Common myeloid progenitor, CD34-positive (primary cell): ENCODE measurements at regions of chr4 and their contacts with region 1.

Region 1: GRCh38 chr4:8267077-8267476 is 2.5 kb upstream of the HTRA3 start:
- DNase-seq: peak; percentile 56 to 78 (median 77)
- H3K4me3 ChIP-seq: no peak overlapping the region
- H3K27ac ChIP-seq: no peak overlapping the region
- H3K4me1 ChIP-seq: peaks cover 0 to 56% (median 43%) of the 10 kb centered on the region in 4 experiments
- H3K27me3 ChIP-seq: peaks cover 0 to 11% (median 3%) of the 10 kb centered on the region in 5 experiments

Region 2: DNA sequence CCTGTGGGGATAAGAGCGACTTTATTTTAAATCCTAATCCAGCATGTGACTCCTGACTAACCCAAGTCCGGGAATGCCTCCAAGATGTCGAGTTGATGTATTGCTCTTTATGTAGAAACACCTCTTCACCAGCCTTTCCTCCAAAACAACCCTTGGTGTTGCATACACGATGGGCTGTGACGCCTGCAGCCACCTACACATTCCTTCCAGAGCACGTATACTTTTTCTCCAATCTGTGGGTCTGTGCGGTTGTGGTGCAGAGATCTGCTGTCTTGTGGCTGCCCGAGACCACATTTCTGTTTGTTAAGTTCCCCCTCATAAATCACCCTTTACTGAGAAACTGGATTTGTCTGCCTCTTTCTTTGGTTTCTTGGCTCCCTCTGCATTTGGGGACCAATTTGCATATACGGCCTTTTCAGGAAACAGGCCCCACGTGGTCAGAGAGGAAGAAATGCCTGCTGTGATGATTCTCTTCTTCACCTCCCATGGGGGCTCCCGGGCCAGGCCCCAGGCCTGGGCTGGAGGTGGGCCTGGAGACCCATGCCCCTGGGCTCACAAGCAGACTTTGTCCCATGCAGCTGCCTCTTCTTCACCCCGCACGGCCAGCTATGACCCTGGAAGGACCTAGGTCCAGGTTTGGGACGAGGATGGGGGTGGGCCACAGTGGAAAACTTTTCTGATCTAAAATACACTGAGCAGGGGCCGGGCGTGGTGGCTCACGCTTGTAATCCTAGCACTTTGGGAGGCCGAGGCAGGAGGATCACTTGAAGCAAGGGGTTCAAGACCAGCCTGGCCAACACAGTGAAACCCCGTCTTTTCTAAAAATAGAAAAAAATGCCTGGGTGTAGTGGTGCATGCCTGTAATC is 306.1 kb before region 1 on chr4:
- CTCF ChIA-PET with region 1: no interaction called
- POLR2A ChIA-PET with region 1: no interaction called
- DNase-seq: peak; percentile 83 to 95 (median 95)
- H3K4me3 ChIP-seq: no peak overlapping the region
- H3K27ac ChIP-seq: no peak overlapping the region
- H3K4me1 ChIP-seq: peaks cover 0 to 13% (median 10%) of the 10 kb centered on the region in 4 experiments
- H3K27me3 ChIP-seq: peaks cover 0 to 88% (median 38%) of the 10 kb centered on the region in 5 experiments

Region 3: GRCh38 chr4:8079031-8079885 is 187.8 kb before region 1 on chr4:
- CTCF ChIA-PET with region 1: no interaction called
- POLR2A ChIA-PET with region 1: no interaction called
- DNase-seq: peak; percentile 86 to 92 (median 90)
- H3K4me3 ChIP-seq: no peak overlapping the region
- H3K27ac ChIP-seq: no peak overlapping the region
- H3K4me1 ChIP-seq: peaks cover 0 to 12% (median 8%) of the 10 kb centered on the region in 4 experiments
- H3K27me3 ChIP-seq: peaks cover 0 to 91% (median 18%) of the 10 kb centered on the region in 5 experiments

Region 4: GRCh38 chr4:8241895-8242696 is 25.0 kb before region 1 on chr4:
- CTCF ChIA-PET with region 1: interaction called, 17 read pairs
- POLR2A ChIA-PET with region 1: no interaction called
- DNase-seq: peak; percentile 64 to 83 (median 78)
- H3K4me3 ChIP-seq: no peak overlapping the region
- H3K27ac ChIP-seq: no peak overlapping the region
- H3K4me1 ChIP-seq: peaks cover 0 to 33% (median 20%) of the 10 kb centered on the region in 4 experiments
- H3K27me3 ChIP-seq: no peaks in the 10 kb centered on the region

Region 5: GRCh38 chr4:8247047-8247930 is 19.8 kb before region 1 on chr4:
- CTCF ChIA-PET with region 1: interaction called, 17 read pairs
- POLR2A ChIA-PET with region 1: no interaction called
- DNase-seq: no peak
- H3K4me3 ChIP-seq: no peak overlapping the region
- H3K27ac ChIP-seq: no peak overlapping the region
- H3K4me1 ChIP-seq: peaks cover 0 to 25% (median 7%) of the 10 kb centered on the region in 4 experiments
- H3K27me3 ChIP-seq: no peaks in the 10 kb centered on the region

Region 6: DNA sequence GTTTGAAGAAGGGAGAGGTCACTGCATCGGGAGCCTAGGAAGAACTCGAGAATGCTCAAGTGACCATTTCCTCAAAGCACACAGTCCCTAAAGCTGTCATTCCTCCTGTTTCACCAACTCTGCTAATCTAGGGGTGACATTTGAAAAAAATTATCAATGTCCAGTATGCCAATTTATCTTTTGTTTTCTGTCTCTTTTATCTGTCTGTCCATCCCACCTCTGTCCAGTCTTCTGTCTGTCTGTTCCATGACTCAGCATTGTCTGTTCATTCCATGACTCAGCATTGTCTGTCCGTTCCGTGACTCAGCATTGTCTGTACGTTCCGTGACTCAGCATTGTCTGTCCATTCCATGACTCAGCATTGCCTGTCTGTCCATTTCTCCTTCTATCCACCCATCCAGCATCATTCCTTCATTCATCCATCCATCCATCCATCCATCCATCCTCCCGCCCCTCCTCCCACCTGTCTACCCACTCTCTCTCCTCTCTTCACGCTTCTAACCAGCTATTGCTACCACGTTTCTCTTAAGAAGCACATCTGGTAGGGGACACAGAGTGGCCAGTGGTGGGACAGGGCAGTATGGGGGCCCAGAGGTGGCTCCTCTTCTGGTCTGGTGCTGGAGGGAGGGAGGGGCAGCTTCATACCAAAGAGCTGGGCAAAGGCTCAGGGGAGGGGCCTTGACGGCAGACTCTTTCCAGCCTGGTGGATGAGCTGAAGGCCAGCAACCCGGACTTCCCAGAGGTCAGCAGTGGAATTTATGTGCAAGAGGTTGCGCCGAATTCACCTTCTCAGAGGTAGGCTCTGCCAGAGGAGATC is 36.6 kb after region 1 on chr4:
- CTCF ChIA-PET with region 1: no interaction called
- POLR2A ChIA-PET with region 1: no interaction called
- DNase-seq: peak; percentile 65 to 87 (median 87)
- H3K4me3 ChIP-seq: no peak overlapping the region
- H3K27ac ChIP-seq: peak overlapping the region in 1 of 2 experiments; percentile 37
- H3K4me1 ChIP-seq: peaks cover 0 to 19% (median 15%) of the 10 kb centered on the region in 4 experiments
- H3K27me3 ChIP-seq: no peaks in the 10 kb centered on the region

Region 7: DNA sequence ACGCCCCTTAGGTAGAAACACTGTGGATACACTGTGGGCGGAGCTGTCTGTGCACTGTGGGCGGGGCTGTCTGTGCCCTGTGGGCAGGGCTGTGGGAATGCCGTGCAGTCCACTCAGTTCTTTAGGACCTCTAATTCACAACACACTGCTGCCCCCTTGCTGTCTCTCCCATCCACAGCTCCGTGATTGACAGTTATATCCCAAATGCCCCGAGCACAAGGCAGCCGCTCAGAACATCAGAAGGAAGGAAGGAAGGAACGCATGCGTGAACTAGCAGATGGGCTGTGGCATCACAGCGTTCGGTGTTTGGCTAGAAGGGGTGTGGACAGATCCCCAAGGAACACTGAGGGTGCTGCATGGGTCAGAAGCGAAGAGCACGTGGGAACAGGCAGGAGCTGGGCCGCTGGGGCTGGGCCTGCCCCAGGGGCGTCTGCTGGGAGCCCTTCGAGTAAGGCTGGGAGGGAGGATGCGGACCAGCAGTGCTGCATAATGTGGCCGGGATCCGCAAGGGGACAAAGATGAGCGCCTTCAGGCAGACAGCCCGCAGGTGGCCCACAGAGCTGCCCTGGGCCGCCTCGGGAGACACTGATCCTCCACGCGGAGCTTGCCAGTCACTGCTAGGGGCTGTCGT is 143.7 kb after region 1 on chr4:
- CTCF ChIA-PET with region 1: interaction called, 28 read pairs
- POLR2A ChIA-PET with region 1: no interaction called
- DNase-seq: peak; percentile 61 to 71 (median 61)
- H3K4me3 ChIP-seq: no peak overlapping the region
- H3K27ac ChIP-seq: no peak overlapping the region
- H3K4me1 ChIP-seq: peaks cover 0 to 12% (median 2%) of the 10 kb centered on the region in 4 experiments
- H3K27me3 ChIP-seq: no peaks in the 10 kb centered on the region